PC-3 (cell line): ENCODE measurements at regions of chr15 and their contacts with region 1.

Region 1: GRCh38 chr15:99565299-99566156 is at the start of gene MEF2A:
- DNase-seq: peak; percentile 88
- ATAC-seq: peak; percentile 79
- H3K4me3 ChIP-seq: peak within 1 kb of the TSS; percentile 84
- H3K27ac ChIP-seq: peak within 1 kb of the TSS; percentile 81
- H3K4me1 ChIP-seq: peaks cover 18% of the 10 kb centered on the region; the same call in 1 of the 2 replicates
- H3K27me3 ChIP-seq: no peaks in the 10 kb centered on the region
- CTCF ChIP-seq: no peak
- total RNA-seq, gene MEF2A: 16.5 and 21.3 TPM in 2 replicates

Region 2: DNA sequence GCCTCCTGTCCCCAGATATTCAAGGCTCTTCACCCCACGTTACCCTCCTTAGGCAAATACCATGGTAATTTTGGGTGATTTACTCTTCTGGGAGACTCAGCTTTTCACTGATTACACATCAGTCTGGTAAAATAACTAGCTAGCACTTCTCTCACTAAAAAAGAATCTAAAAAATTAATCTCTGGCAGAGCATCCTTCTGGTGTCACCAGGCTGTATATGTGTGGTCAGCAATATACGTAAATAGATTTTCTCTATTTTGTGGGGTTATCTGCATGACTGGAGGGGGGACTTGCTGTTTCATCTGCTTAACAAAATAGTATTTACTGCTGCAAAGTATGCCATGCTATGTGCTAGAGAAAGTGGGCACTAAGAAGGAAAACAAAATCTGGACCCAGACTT is 269.1 kb before region 1 on chr15:
- CTCF ChIA-PET with region 1: no interaction called
- POLR2A ChIA-PET with region 1: no interaction called
- intact Hi-C with region 1: no loop called
- DNase-seq: no peak
- ATAC-seq: no peak
- H3K4me3 ChIP-seq: no peak overlapping the region
- H3K27ac ChIP-seq: no peak overlapping the region
- H3K4me1 ChIP-seq: no peaks in the 10 kb centered on the region
- H3K27me3 ChIP-seq: no peaks in the 10 kb centered on the region
- CTCF ChIP-seq: no peak

Region 3: GRCh38 chr15:99424978-99425656 is 140.4 kb before region 1 on chr15:
- CTCF ChIA-PET with region 1: no interaction called
- POLR2A ChIA-PET with region 1: no interaction called
- intact Hi-C with region 1: loop called (anchors 5 kb)
- DNase-seq: peak; percentile 89
- ATAC-seq: peak; percentile 96
- H3K4me3 ChIP-seq: no peak overlapping the region
- H3K27ac ChIP-seq: peak overlapping the region; percentile 83
- H3K4me1 ChIP-seq: peaks cover 15% of the 10 kb centered on the region
- H3K27me3 ChIP-seq: no peaks in the 10 kb centered on the region
- CTCF ChIP-seq: no peak

Region 4: GRCh38 chr15:99619712-99620111 is 54.2 kb after region 1 on chr15:
- CTCF ChIA-PET with region 1: no interaction called
- POLR2A ChIA-PET with region 1: interaction called, 15 read pairs
- intact Hi-C with region 1: no loop called
- DNase-seq: no peak
- ATAC-seq: no peak
- H3K4me3 ChIP-seq: no peak overlapping the region
- H3K27ac ChIP-seq: no peak overlapping the region
- H3K4me1 ChIP-seq: no peaks in the 10 kb centered on the region
- H3K27me3 ChIP-seq: no peaks in the 10 kb centered on the region
- CTCF ChIP-seq: no peak

Region 5: DNA sequence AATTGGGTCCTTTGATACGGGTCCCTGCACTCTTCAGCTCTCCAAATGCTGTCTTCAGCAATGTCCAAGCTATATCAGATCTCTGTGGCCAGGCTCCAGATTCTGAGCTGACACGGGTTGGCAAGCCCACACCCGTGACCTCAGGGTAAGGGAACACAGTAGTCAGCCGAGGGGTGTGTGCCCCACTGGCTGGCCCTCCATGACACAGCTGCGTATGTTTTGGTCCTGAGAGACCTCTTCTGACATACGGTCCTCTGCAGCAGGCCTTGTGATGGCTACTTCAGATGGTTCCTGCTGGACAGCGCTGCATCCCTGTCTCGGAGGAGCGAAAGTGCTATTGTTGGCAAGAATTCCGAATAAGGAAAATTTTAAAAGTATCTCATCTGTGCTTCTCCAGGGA is 861.4 kb after region 1 on chr15:
- CTCF ChIA-PET with region 1: no interaction called
- POLR2A ChIA-PET with region 1: no interaction called
- intact Hi-C with region 1: no loop called
- DNase-seq: no peak
- ATAC-seq: no peak
- H3K4me3 ChIP-seq: no peak overlapping the region
- H3K27ac ChIP-seq: no peak overlapping the region
- H3K4me1 ChIP-seq: no peaks in the 10 kb centered on the region
- H3K27me3 ChIP-seq: peaks cover 18% of the 10 kb centered on the region
- CTCF ChIP-seq: no peak